PC-3 (cell line): ENCODE measurements at regions of chr7 and their contacts with region 1.

Region 1: GRCh38 chr7:138575897-138576428 is 115.9 kb downstream of the TRIM24 start:
- DNase-seq: no peak
- ATAC-seq: no peak
- H3K4me3 ChIP-seq: no peak overlapping the region
- H3K27ac ChIP-seq: no peak overlapping the region
- H3K4me1 ChIP-seq: no peaks in the 10 kb centered on the region
- H3K27me3 ChIP-seq: no peaks in the 10 kb centered on the region
- CTCF ChIP-seq: no peak

Region 2: GRCh38 chr7:138478499-138478908 is 97.5 kb before region 1 on chr7:
- CTCF ChIA-PET with region 1: no interaction called
- POLR2A ChIA-PET with region 1: no interaction called
- intact Hi-C with region 1: loop called (anchors 10 kb)
- DNase-seq: no peak
- ATAC-seq: no peak
- H3K4me3 ChIP-seq: no peak overlapping the region
- H3K27ac ChIP-seq: no peak overlapping the region
- H3K4me1 ChIP-seq: peaks cover 13% of the 10 kb centered on the region
- H3K27me3 ChIP-seq: no peaks in the 10 kb centered on the region
- CTCF ChIP-seq: no peak

Region 3: DNA sequence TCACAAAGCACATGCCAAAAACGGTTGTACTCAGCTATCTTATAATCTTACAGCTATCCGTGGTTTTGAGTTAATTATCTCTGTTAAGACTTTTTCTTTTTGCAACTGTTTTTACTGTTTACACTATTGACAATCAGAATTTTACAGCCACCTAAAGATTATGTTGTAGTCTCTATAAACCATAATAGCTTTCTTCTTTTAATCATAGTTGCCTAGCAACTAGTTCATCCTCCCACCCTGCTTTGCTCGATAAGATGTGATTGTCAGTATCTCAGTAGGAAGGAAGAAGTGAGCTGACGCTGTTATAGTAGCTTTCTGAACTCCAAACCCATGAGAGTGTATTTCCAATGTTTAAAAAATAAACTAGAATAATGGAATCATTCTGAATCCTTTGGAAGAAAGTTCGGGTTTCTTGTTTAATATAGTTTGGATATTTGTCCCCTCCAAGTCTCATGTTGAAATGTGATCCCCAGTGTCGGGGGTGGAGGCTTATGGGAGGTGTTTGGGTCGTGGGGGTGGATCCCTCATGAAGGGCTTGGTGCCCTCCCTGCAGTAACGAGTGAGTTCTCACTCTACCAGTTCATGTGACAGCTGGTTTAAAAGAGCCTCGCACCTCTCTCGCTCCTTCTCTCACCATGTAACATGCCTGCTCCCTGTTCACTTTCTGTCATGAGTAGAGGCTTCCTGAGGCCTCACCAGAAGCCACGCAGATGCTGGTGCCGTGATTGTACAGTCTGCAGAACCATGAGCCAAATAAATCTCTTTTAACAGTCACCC is 57.1 kb after region 1 on chr7:
- CTCF ChIA-PET with region 1: no interaction called
- POLR2A ChIA-PET with region 1: no interaction called
- intact Hi-C with region 1: no loop called
- DNase-seq: no peak
- ATAC-seq: no peak
- H3K4me3 ChIP-seq: no peak overlapping the region
- H3K27ac ChIP-seq: no peak overlapping the region
- H3K4me1 ChIP-seq: no peaks in the 10 kb centered on the region
- H3K27me3 ChIP-seq: 0 out of 2 replicates have a peak, but pooled peaks cover 3% of the 10 kb centered on the region
- CTCF ChIP-seq: no peak